Activated naive CD4-positive, alpha-beta T cell treated with anti-CD3 and anti-CD28 coated beads for 36 hours (primary cell): ENCODE measurements at regions of chr11 and their contacts with region 1.

Region 1: DNA sequence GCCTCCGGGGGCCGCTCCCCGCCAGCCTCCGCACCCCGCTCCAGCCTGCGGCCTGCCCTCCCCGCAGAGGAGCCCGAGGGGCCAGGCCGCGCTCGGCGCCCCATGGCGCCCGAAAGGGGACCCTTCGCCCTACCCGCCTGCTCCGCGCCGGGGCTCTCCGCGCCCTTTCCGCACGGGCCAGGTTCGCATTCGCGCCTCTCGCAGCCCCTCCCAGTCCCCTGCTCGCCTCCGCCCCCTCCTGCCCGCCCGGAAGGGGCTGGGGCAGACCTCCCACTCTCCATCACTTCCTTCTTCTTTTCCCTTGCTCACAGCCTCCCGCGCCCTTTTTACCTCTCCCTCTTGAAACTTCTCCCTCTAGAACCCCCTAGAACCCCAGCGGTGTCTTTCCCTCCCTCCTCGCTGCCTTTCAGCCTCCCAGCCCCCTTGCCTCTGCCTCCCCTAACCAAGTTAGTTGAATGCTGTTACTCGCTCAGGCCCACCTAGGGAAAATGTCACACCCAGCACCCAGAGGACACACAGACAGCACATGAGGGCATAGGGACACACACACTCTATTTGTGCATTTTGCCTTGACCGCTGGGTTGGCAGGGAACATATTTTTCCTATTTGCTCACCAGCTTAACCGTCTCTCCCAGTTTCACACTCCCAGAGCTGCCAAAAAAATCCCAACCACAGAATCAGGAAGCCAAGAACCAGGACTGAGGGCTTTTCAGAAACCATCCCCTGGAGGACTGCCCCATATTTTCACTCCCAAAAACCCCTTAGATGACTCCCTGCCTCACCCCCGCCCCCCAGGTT is at the start of gene SLC43A3:
- DNase-seq: peak; percentile 84
- H3K4me3 Mint-ChIP-seq: peak within 1 kb of the TSS; percentile 95
- H3K27ac Mint-ChIP-seq: peak within 1 kb of the TSS; percentile 96
- H3K4me1 Mint-ChIP-seq: peaks cover 33% of the 10 kb centered on the region
- H3K27me3 Mint-ChIP-seq: no peaks in the 10 kb centered on the region
- total RNA-seq, gene SLC43A3: 116 to 117 TPM

Region 2: DNA sequence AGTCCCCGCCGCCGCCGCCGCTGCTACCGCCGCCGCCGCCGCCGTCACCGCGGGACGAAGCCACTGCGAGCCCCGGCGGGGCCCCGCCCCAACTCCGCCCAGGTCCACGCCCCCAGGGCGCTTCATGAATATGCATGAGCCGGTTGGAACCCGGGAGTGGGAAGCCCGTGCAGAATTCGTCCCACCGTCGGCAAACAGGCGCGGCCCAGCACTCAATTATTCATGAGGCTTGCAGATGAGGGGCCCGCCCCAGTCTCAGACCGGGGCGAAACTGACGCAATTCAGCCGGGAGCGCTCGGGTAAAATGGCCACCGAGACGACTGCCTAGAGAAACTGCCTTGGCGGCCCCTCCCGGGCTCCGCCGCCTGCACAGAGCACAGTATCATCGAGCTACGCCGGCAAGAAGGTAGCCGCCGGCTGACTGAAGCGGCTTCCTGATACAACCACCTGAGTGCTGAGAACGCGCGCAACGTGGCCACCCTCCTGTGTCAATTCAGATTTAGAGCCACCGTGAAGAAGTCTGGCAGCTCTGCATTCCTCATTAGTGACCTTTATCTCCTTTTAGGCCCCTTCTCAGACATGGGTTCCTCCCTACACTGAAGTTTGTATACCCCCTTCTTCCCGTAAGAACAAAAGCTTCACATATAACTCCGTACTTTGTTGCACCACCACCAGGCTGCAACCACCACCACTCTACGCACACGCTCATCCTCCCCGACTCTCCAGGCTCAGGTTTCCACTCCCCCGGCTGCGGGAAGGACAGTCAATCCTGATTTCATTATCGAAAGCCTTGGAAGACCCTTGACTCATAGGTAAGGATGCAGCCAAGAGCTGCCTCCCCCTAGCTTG is 102.0 kb before region 1 on chr11 and contains the start of gene TNKS1BP1:
- CTCF ChIA-PET with region 1: no interaction called
- intact Hi-C with region 1: loop called (anchors 1 kb)
- DNase-seq: peak; percentile 95
- H3K4me3 Mint-ChIP-seq: peak within 1 kb of the TSS; percentile 82
- H3K27ac Mint-ChIP-seq: peak within 1 kb of the TSS; percentile 94
- H3K4me1 Mint-ChIP-seq: peaks cover 56% of the 10 kb centered on the region
- H3K27me3 Mint-ChIP-seq: no peaks in the 10 kb centered on the region
- total RNA-seq, gene TNKS1BP1: 14.1 to 14.7 TPM

Region 3: GRCh38 chr11:57406337-57406904 is 20.7 kb before region 1 on chr11:
- CTCF ChIA-PET with region 1: interaction called, 3 read pairs
- intact Hi-C with region 1: loop called (anchors 1 kb)
- DNase-seq: peak; percentile 75
- H3K4me3 Mint-ChIP-seq: no peak overlapping the region
- H3K27ac Mint-ChIP-seq: peak overlapping the region; percentile 78
- H3K4me1 Mint-ChIP-seq: peaks cover 60% of the 10 kb centered on the region
- H3K27me3 Mint-ChIP-seq: no peaks in the 10 kb centered on the region

Region 4: GRCh38 chr11:57657194-57658022 is 230.3 kb after region 1 on chr11 and contains the start of gene CLP1:
- CTCF ChIA-PET with region 1: no interaction called
- intact Hi-C with region 1: loop called (anchors 1 kb)
- DNase-seq: peak; percentile 100
- H3K4me3 Mint-ChIP-seq: peak within 1 kb of the TSS; percentile 92
- H3K27ac Mint-ChIP-seq: peak within 1 kb of the TSS; percentile 90
- H3K4me1 Mint-ChIP-seq: peaks cover 34% of the 10 kb centered on the region
- H3K27me3 Mint-ChIP-seq: no peaks in the 10 kb centered on the region
- total RNA-seq, gene CLP1: 11.3 to 14.2 TPM

Region 5: DNA sequence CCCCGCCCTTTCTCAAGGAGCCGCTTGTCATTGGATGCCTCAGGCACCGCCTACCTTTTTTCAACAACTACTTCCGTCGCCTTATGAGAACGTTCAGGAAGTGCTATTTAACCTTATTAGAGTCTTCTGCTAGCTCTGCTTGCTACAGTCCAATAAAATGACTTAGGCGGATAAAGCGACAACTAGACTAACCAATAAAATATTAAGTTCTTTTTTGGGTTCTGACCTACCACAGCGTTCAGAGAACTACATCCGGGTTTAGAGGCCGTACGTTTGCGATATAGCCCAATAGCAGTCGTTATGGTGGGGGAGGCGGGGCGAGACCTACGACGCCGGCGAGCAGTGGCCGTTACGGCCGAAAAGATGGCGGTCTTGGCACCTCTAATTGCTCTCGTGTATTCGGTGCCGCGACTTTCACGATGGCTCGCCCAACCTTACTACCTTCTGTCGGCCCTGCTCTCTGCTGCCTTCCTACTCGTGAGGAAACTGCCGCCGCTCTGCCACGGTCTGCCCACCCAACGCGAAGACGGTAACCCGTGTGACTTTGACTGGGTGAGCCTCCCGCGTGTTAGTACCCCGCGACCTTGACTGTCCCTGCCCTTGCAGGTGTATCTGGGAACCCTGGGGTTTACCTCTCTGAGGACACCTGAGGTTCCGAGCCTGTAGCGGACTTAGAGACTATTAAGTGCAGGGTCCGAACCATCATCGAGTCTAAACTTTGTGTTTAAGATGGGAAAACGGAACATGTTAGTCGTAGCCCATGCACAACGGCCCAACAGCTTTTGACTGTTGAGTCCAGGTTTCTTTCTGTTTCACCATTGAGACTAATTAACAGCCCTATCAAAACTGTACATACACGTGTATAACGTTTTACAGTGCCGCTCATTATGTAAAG is 285.4 kb after region 1 on chr11 and contains the start of gene TMX2:
- CTCF ChIA-PET with region 1: no interaction called
- intact Hi-C with region 1: loop called (anchors 1 kb)
- DNase-seq: peak; percentile 95
- H3K4me3 Mint-ChIP-seq: peak within 1 kb of the TSS; percentile 99
- H3K27ac Mint-ChIP-seq: peak within 1 kb of the TSS; percentile 92
- H3K4me1 Mint-ChIP-seq: peaks cover 50% of the 10 kb centered on the region
- H3K27me3 Mint-ChIP-seq: no peaks in the 10 kb centered on the region
- total RNA-seq, gene TMX2: 49.8 to 54.7 TPM

Region 6: DNA sequence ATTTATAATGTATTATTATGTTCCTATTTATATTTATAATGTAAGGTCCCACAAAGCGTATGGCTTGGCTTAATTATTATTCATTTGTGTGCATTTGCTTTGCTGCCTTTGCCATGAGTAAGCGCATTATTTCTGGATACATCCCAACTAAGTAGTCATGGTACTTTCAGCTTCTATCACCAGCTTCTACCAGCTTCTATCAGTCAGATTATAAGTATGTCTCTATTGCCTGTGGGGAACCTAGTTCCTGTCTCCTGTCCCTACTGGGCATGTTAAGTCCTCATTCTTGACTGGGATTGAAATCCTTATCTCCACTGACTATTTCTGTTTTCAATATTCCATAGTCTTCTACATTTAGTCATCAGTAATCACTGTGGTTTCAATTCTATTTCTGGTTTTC is 874.4 kb after region 1 on chr11:
- CTCF ChIA-PET with region 1: no interaction called
- intact Hi-C with region 1: no loop called
- DNase-seq: no peak
- H3K4me3 Mint-ChIP-seq: no peak overlapping the region
- H3K27ac Mint-ChIP-seq: no peak overlapping the region
- H3K4me1 Mint-ChIP-seq: no peaks in the 10 kb centered on the region
- H3K27me3 Mint-ChIP-seq: peaks cover 6% of the 10 kb centered on the region

Region 7: GRCh38 chr11:59152312-59152951 is 1725.3 kb after region 1 on chr11:
- CTCF ChIA-PET with region 1: no interaction called
- intact Hi-C with region 1: loop called (anchors 5 kb)
- DNase-seq: peak; percentile 71
- H3K4me3 Mint-ChIP-seq: peak overlapping the region; percentile 53
- H3K27ac Mint-ChIP-seq: peak overlapping the region; percentile 91
- H3K4me1 Mint-ChIP-seq: peaks cover 38% of the 10 kb centered on the region
- H3K27me3 Mint-ChIP-seq: no peaks in the 10 kb centered on the region